SK-N-SH (cell line): ENCODE measurements at regions of chr16 and their contacts with region 1.

Region 1: DNA sequence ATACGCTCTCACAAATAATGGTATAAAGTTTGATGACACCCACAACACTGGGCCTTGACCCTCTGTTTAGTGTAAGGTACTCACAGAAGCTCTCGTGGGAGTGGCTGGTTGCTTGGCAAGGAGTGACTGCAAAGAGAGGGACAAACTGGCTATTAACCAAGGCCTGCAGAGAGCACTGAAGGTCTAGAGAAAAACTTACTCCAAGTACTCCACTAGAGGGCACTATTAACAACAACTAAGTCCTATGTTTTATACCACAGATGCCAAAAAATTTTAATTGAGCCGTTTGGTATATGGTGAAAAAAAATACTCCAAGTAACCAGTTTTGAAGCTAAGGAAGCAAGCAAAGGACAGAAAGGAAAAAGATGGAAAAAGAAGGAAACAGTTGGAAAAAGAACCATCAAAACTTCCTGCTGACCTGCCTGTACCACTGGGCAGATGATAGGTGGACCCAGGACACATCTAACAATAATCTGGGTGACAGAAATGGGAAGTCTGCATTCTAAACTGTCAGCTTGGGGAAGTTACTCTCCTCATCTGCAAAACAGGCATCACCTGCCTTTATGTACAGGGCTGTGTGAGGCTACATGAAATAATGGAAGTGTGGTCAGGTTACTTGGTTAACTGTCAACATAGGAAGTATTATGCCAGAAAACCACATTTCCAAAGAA is 23.2 kb downstream of the DYNC1LI2 start:
- DNase-seq: peak; percentile 59
- H3K4me3 ChIP-seq: no peak overlapping the region
- H3K27ac ChIP-seq: peak overlapping the region in 1 of 2 experiments; percentile 30; a peak in 1 of 4 replicates
- H3K4me1 ChIP-seq: no peaks in the 10 kb centered on the region
- H3K27me3 ChIP-seq: no peaks in the 10 kb centered on the region
- CTCF ChIP-seq: peak; percentile 75
- EP300 ChIP-seq: no peak
- RAD21 ChIP-seq: peak; percentile 63

Region 2: GRCh38 chr16:66521951-66522771 is 206.1 kb before region 1 on chr16:
- CTCF ChIA-PET with region 1: no interaction called
- POLR2A ChIA-PET with region 1: no interaction called
- DNase-seq: no peak
- H3K4me3 ChIP-seq: no peak overlapping the region
- H3K27ac ChIP-seq: peak overlapping the region in 1 of 2 experiments; percentile 17; a peak in 1 of 4 replicates
- H3K4me1 ChIP-seq: peaks cover 4 to 5% of the 10 kb centered on the region in 2 experiments; a peak in 3 of 4 replicates
- H3K27me3 ChIP-seq: no peaks in the 10 kb centered on the region
- CTCF ChIP-seq: no peak
- EP300 ChIP-seq: no peak
- RAD21 ChIP-seq: no peak

Region 3: GRCh38 chr16:66608241-66609138 is 119.8 kb before region 1 on chr16:
- CTCF ChIA-PET with region 1: interaction called, 25 read pairs
- POLR2A ChIA-PET with region 1: no interaction called
- DNase-seq: peak; percentile 94
- H3K4me3 ChIP-seq: no peak overlapping the region; a peak in 1 of 4 replicates
- H3K27ac ChIP-seq: peak overlapping the region; percentile 36 to 38; a peak in 3 of 4 replicates
- H3K4me1 ChIP-seq: peaks cover 7 to 19% of the 10 kb centered on the region in 2 experiments; a peak in 3 of 4 replicates
- H3K27me3 ChIP-seq: no peaks in the 10 kb centered on the region
- CTCF ChIP-seq: peak; percentile 94
- EP300 ChIP-seq: no peak
- RAD21 ChIP-seq: peak; percentile 72

Region 4: DNA sequence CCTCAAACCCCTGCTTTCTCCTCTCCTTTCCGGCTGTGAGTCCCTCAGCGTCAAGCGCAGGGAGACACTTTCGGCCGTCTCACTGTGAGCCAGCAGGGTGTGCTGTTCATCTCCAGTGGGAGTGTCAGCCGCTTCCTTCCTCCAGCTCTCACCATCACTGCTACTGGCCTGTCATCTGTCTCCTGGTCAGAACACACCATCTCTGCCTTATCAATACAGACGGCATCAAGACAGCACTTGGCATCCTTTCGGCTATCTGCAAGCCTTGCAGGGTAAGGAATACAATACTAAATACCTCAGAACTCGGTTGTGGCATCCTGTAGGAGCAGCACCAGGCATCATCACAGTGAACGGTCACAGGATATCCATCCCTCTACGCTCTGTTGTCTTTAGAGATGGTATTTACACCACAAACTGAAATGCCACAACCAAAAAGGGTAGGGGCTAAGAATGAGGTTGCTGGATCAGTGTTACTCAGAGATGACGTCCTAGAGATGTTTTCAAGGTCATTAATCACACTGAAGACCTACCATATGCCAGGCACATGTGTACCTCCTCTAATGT is 11.1 kb before region 1 on chr16:
- CTCF ChIA-PET with region 1: interaction called, 34 read pairs
- POLR2A ChIA-PET with region 1: no interaction called
- DNase-seq: peak; percentile 69
- H3K4me3 ChIP-seq: no peak overlapping the region
- H3K27ac ChIP-seq: peak overlapping the region; percentile 5 to 8; a peak in 2 of 4 replicates
- H3K4me1 ChIP-seq: peaks cover 0 to 12% of the 10 kb centered on the region in 2 experiments; a peak in 1 of 4 replicates
- H3K27me3 ChIP-seq: no peaks in the 10 kb centered on the region
- CTCF ChIP-seq: peak; percentile 55
- EP300 ChIP-seq: no peak
- RAD21 ChIP-seq: peak; percentile 58

Region 5: GRCh38 chr16:66740010-66740409 is 11.8 kb after region 1 on chr16:
- CTCF ChIA-PET with region 1: interaction called, 54 read pairs
- POLR2A ChIA-PET with region 1: interaction called, 4 read pairs
- DNase-seq: peak; percentile 69
- H3K4me3 ChIP-seq: peak overlapping the region in 1 of 2 experiments; percentile 12; a peak in 1 of 4 replicates
- H3K27ac ChIP-seq: 0 out of 4 replicates have a peak overlapping the region, but pooled peaks of 1 of the 2 experiments have one; percentile 75
- H3K4me1 ChIP-seq: peaks cover 10 to 15% of the 10 kb centered on the region in 2 experiments; a peak in 3 of 4 replicates
- H3K27me3 ChIP-seq: no peaks in the 10 kb centered on the region
- CTCF ChIP-seq: peak; percentile 82
- EP300 ChIP-seq: no peak
- RAD21 ChIP-seq: peak; percentile 43

Region 6: GRCh38 chr16:66751303-66751991 is 23.2 kb after region 1 on chr16 and contains the start of gene DYNC1LI2:
- CTCF ChIA-PET with region 1: interaction called, 39 read pairs
- POLR2A ChIA-PET with region 1: no interaction called
- DNase-seq: peak; percentile 98
- H3K4me3 ChIP-seq: peak within 1 kb of the TSS; percentile 87 to 91
- H3K27ac ChIP-seq: peak within 1 kb of the TSS; percentile 75 to 92
- H3K4me1 ChIP-seq: peaks cover 15 to 17% of the 10 kb centered on the region in 2 experiments; a peak in 2 of 4 replicates
- H3K27me3 ChIP-seq: no peaks in the 10 kb centered on the region
- CTCF ChIP-seq: peak; percentile 65
- EP300 ChIP-seq: 0 out of 4 replicates have a peak, but pooled peaks of 1 of the 2 experiments have one; percentile 6
- RAD21 ChIP-seq: peak; percentile 40; the same call in 1 of the 2 replicates
- polyA plus RNA-seq, gene DYNC1LI2: 33.1 and 49.6 TPM in 2 replicates